Calu3 (cell line): ENCODE measurements at regions of chr12 and their contacts with region 1.

Region 1: DNA sequence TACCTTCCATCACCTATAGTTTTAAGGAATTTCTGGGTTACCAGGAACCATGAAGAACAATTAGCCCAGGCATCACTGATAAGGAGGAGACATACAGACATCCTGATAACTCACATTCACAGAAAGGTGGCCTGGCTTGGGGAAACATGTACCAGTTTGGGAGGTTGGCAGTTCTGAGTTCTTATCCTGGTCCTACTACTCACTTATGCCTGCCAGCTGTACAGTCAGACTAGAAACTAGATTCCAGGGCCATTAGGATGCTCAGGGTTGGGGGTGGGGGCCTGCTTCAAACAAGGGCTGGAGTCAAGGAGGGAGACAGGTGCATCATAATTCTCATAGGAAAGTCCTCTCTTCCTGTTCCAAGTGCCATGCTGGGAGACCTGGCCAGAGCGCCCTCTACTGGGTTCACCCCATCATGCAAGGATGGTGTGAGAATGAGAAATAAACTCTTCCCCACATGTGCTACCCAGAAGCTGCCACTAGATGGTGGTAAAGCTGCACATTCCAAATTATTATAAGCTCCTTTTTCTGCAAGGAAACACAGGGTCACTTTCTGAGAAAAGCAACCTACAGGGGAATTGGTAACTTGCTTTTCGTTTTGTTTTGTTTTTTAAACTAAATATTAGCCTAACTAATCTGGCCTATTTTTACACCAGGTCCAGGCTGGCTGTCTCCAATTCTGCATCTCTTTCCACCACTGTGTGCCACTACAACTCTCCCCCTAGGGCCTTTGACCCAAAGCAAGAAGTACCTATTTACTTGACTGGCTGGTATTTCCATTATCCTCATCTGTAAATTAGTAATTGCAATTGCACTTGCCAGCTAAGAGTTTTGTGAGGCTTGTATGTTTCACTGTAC is 14.5 kb downstream of the OAS2 start:
- DNase-seq: peak; percentile 67
- H3K4me3 Mint-ChIP-seq: no peak overlapping the region
- H3K27ac Mint-ChIP-seq: no peak overlapping the region
- H3K4me1 Mint-ChIP-seq: no peaks in the 10 kb centered on the region
- H3K27me3 Mint-ChIP-seq: peaks cover 20% of the 10 kb centered on the region
- CTCF ChIP-seq: peak; percentile 92

Region 2: GRCh38 chr12:112798006-112798760 is 194.6 kb before region 1 on chr12:
- CTCF ChIA-PET with region 1: no interaction called
- intact Hi-C with region 1: no loop called
- DNase-seq: no peak
- H3K4me3 Mint-ChIP-seq: no peak overlapping the region
- H3K27ac Mint-ChIP-seq: no peak overlapping the region
- H3K4me1 Mint-ChIP-seq: no peaks in the 10 kb centered on the region
- H3K27me3 Mint-ChIP-seq: peaks cover 84% of the 10 kb centered on the region
- CTCF ChIP-seq: no peak

Region 3: GRCh38 chr12:112900299-112901145 is 92.2 kb before region 1 on chr12:
- CTCF ChIA-PET with region 1: interaction called, 12 read pairs
- intact Hi-C with region 1: no loop called
- DNase-seq: peak; percentile 64
- H3K4me3 Mint-ChIP-seq: no peak overlapping the region
- H3K27ac Mint-ChIP-seq: no peak overlapping the region
- H3K4me1 Mint-ChIP-seq: peaks cover 35% of the 10 kb centered on the region
- H3K27me3 Mint-ChIP-seq: peaks cover 36% of the 10 kb centered on the region
- CTCF ChIP-seq: peak; percentile 73

Region 4: DNA sequence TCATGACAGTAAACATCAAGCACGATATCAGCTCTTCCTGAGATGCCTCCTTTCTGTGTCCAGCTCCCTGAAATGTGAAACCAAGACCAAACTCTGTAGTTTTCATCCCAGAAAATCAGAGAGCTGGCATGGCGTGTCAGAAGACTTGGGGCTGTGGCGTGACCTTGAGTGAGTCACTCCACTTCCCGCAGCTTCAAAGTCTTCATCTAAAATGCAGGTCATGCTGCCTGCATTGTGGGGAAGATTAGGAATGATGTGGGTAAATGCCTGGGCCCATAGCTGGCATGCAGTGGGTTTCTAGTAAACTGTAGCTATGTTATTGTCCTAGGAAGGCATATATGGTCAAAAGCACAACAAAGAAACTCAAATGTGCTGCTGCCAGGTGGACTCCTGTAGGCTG is 14.4 kb after region 1 on chr12:
- CTCF ChIA-PET with region 1: interaction called, 14 read pairs
- intact Hi-C with region 1: no loop called
- DNase-seq: peak; percentile 6
- H3K4me3 Mint-ChIP-seq: no peak overlapping the region
- H3K27ac Mint-ChIP-seq: no peak overlapping the region
- H3K4me1 Mint-ChIP-seq: peaks cover 8% of the 10 kb centered on the region
- H3K27me3 Mint-ChIP-seq: peaks cover 37% of the 10 kb centered on the region
- CTCF ChIP-seq: no peak

Region 5: GRCh38 chr12:113098446-113098896 is 105.7 kb after region 1 on chr12:
- CTCF ChIA-PET with region 1: interaction called, 10 read pairs
- intact Hi-C with region 1: loop called (anchors 5 kb)
- DNase-seq: peak; percentile 97
- H3K4me3 Mint-ChIP-seq: peak overlapping the region; percentile 19
- H3K27ac Mint-ChIP-seq: peak overlapping the region; percentile 91
- H3K4me1 Mint-ChIP-seq: peaks cover 15% of the 10 kb centered on the region
- H3K27me3 Mint-ChIP-seq: no peaks in the 10 kb centered on the region
- CTCF ChIP-seq: peak; percentile 95

Region 6: DNA sequence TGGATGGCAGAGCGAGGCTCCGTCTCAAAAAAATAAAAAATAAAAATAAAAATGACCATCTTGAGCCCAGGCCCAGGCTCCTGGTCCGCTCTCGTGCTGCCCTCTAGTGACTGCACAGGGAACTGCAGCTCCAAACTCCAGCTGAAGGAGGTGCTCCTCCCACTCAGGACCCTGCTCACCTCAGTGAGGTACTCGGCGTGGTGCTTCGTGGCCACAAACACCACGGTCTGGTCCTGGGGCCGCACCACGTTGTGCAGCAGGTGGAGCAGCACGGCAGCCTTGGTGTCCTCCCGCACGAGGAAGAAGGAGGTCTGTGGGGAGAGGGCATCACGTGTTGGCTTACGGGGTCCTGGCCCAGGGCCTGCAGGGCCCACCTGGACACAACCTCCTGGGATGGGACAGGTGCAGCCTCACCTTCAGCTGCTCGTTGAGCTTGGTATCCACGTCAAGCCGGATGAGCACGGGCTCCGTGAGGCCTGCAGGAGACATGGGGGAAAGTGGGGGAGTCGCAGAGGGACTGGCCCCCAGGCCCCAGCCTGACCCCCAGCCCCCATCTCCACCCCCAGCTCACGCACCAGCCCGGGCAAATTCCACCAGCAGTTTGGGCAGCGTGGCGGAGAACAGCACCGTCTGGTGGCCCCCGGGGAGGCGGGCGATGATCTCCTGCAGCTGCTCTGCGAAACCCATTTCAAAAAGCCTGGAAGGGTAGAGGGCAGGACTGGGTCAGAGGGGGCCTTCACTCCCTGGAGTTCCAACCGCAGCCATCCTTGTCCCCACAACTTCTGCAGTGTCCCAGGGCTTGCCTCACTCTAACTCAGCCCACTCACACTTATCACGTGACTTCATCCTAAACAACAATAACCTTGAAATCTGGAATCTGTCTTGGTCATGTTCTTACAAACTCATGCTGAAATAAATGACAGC is 182.0 kb after region 1 on chr12:
- CTCF ChIA-PET with region 1: interaction called, 10 read pairs
- intact Hi-C with region 1: loop called (anchors 5 kb)
- DNase-seq: peak; percentile 89
- H3K4me3 Mint-ChIP-seq: no peak overlapping the region
- H3K27ac Mint-ChIP-seq: no peak overlapping the region
- H3K4me1 Mint-ChIP-seq: peaks cover 8% of the 10 kb centered on the region
- H3K27me3 Mint-ChIP-seq: no peaks in the 10 kb centered on the region
- CTCF ChIP-seq: peak; percentile 94